GM12878 (cell line): ENCODE measurements at regions of chr5 and their contacts with region 1.

Region 1: GRCh38 chr5:62315376-62316175 is 9.6 kb downstream of the KIF2A start:
- DNase-seq: no peak
- ATAC-seq: no peak
- H3K4me3 ChIP-seq: no peak overlapping the region
- H3K27ac ChIP-seq: no peak overlapping the region
- H3K4me1 ChIP-seq: no peaks in the 10 kb centered on the region; the same call in 1 of the 2 replicates
- H3K27me3 ChIP-seq: no peaks in the 10 kb centered on the region
- CTCF ChIP-seq: no peak
- EP300 ChIP-seq: no peak
- POLR2A ChIP-seq: no peak
- RAD21 ChIP-seq: no peak

Region 2: GRCh38 chr5:61177716-61178115 is 1137.9 kb before region 1 on chr5:
- CTCF ChIA-PET with region 1: no interaction called
- POLR2A ChIA-PET with region 1: no interaction called
- RAD21 ChIA-PET with region 1: no interaction called
- SMC1A ChIA-PET with region 1: no interaction called
- in situ Hi-C with region 1: no loop called
- intact Hi-C with region 1: no loop called
- DNase-seq: no peak
- ATAC-seq: peak; percentile 91
- H3K4me3 ChIP-seq: no peak overlapping the region
- H3K27ac ChIP-seq: no peak overlapping the region
- H3K4me1 ChIP-seq: peaks cover 10% of the 10 kb centered on the region
- H3K27me3 ChIP-seq: no peaks in the 10 kb centered on the region
- CTCF ChIP-seq: no peak
- EP300 ChIP-seq: no peak
- POLR2A ChIP-seq: no peak
- RAD21 ChIP-seq: no peak

Region 3: GRCh38 chr5:62326302-62326701 is 10.7 kb after region 1 on chr5:
- CTCF ChIA-PET with region 1: interaction called, 3 read pairs
- POLR2A ChIA-PET with region 1: interaction called, 13 read pairs
- RAD21 ChIA-PET with region 1: interaction called, 4 read pairs
- SMC1A ChIA-PET with region 1: interaction called, 16 read pairs
- in situ Hi-C with region 1: no loop called
- intact Hi-C with region 1: no loop called
- DNase-seq: no peak
- ATAC-seq: peak; percentile 82
- H3K4me3 ChIP-seq: no peak overlapping the region
- H3K27ac ChIP-seq: peak overlapping the region; percentile 37; the same call in 1 of the 2 replicates
- H3K4me1 ChIP-seq: peaks cover 19% of the 10 kb centered on the region
- H3K27me3 ChIP-seq: no peaks in the 10 kb centered on the region
- CTCF ChIP-seq: no peak
- EP300 ChIP-seq: no peak
- POLR2A ChIP-seq: no peak
- RAD21 ChIP-seq: no peak